Testis (tissue), 5 donors: ENCODE measurements at regions of chr9 and their contacts with region 1.

Region 1: DNA sequence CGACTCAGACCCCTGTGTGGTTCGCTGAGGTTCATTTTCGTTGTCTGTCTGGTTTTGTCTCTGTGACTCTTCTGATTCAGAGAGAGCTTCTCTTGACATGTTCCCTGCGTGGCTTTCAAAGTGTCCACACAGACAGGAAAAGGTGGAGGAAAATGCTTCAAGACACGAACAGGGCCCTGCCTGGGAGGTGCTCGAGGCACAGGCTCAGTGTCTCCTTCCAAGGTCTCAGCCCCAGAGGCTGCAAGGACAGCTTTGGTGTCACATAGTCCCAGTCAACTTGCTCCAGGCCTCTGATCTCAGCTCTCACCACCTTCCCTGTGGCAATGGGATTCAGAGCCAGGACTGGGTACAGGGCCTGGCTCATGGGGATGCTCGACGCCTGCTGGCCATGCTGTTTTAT is 51.6 kb upstream of the SARDH start:
- DNase-seq: no peak
- H3K4me3 ChIP-seq: no peak overlapping the region
- H3K27ac ChIP-seq: no peak overlapping the region
- H3K4me1 ChIP-seq: peaks cover 6% of the 10 kb centered on the region
- H3K27me3 ChIP-seq: no peaks in the 10 kb centered on the region
- CTCF ChIP-seq: no peak
- POLR2A ChIP-seq: no peak

Region 2: GRCh38 chr9:133992780-133993634 is 203.2 kb after region 1 on chr9:
- intact Hi-C with region 1: loop called (anchors 2 kb)
- DNase-seq: peak; percentile 78
- H3K4me3 ChIP-seq: peak overlapping the region; percentile 60 to 76
- H3K27ac ChIP-seq: peak overlapping the region; percentile 46 to 86
- H3K4me1 ChIP-seq: peaks cover 9% of the 10 kb centered on the region
- H3K27me3 ChIP-seq: no peaks in the 10 kb centered on the region
- CTCF ChIP-seq: no peak
- POLR2A ChIP-seq: no peak

Region 3: GRCh38 chr9:134111064-134111463 is 321.3 kb after region 1 on chr9:
- intact Hi-C with region 1: no loop called
- DNase-seq: no peak
- H3K4me3 ChIP-seq: no peak overlapping the region
- H3K27ac ChIP-seq: no peak overlapping the region
- H3K4me1 ChIP-seq: no peaks in the 10 kb centered on the region
- H3K27me3 ChIP-seq: no peaks in the 10 kb centered on the region
- CTCF ChIP-seq: no peak
- POLR2A ChIP-seq: no peak